ENCODE measurements at regions of chr22 and their contacts with region 1.

Region 1: DNA sequence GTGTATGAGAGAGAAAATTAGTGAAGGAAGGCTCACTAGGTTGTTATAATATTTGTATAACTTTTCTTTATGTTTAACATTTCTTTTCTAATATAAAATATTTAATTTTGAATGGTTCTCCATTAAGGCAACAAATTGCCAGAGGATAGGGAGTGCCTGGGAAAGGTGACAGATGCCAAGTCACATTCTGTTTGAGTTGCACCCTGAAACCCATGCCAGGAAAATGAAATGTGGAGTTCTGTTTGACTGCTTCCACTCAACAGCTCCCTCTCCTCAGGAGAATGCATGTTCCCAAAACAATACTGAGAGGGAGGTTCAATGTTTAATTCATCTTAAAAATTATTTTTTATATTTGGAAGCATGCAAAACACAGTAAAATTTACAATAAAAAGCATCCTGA is 5.9 kb upstream of the USP18 start:
- DNase-seq: no peak

Region 2: GRCh38 chr22:17931400-17931825 is 212.7 kb before region 1 on chr22:
- intact Hi-C with region 1: loop called in 1 of 2 experiments (anchors 5 kb)
- DNase-seq: no peak